GM12878 (cell line): ENCODE measurements at regions of chr11 and their contacts with region 1.

Region 1: GRCh38 chr11:18768472-18768901 is 23.1 kb downstream of the PTPN5 start:
- DNase-seq: peak; percentile 77
- ATAC-seq: peak; percentile 80
- H3K4me3 ChIP-seq: no peak overlapping the region
- H3K27ac ChIP-seq: peak overlapping the region; percentile 35
- H3K4me1 ChIP-seq: peaks cover 38% of the 10 kb centered on the region
- H3K27me3 ChIP-seq: no peaks in the 10 kb centered on the region
- CTCF ChIP-seq: no peak
- EP300 ChIP-seq: peak; percentile 92 to 94
- POLR2A ChIP-seq: no peak
- RAD21 ChIP-seq: no peak

Region 2: DNA sequence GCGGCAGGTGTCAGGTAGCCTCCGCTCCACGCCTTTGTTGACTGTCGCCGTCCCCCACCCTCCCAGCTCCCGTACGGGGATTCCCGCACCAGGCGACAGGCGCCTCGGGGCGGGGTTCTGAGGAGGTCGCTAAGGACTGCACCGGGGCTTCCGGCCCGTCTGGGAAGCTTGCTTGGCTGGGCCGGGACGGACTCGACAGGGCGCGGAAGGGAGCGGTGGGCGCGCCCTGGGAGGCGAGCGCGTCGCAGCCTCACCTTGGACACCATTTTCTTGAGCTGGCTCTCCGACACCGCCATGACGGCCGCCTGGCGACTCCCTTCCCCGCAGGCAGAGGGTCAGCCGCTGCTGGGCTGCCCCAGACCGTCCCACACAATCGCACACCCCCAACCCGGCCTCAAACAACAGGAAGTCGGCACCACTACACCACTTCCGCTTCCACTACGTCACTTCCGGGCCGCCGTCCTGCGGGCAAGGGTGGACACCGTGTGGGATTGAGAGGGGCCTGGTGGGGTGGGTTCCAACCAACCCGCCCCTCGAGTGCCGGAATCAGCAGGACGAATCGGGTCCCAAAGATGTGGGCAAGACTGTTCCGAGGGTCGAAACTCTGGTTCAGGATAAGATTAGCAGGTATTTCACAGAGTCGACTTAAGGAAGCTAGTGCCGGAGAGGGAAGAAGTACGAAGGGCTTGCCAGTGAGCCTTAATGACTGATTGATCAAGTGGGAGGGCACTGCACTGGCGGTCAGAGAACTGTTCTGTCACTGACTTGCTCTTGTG is 241.8 kb before region 1 on chr11 and contains the start of gene TSG101:
- CTCF ChIA-PET with region 1: interaction called, 5 read pairs
- POLR2A ChIA-PET with region 1: interaction called, 3 read pairs
- RAD21 ChIA-PET with region 1: interaction called, 7 read pairs
- SMC1A ChIA-PET with region 1: no interaction called
- in situ Hi-C with region 1: no loop called
- intact Hi-C with region 1: loop called (anchors 5 kb)
- DNase-seq: peak; percentile 69
- ATAC-seq: peak; percentile 91
- H3K4me3 ChIP-seq: peak within 1 kb of the TSS; percentile 95
- H3K27ac ChIP-seq: peak within 1 kb of the TSS; percentile 91
- H3K4me1 ChIP-seq: no peaks in the 10 kb centered on the region; the same call in 1 of the 2 replicates
- H3K27me3 ChIP-seq: no peaks in the 10 kb centered on the region
- CTCF ChIP-seq: no peak
- EP300 ChIP-seq: peak in 1 of 2 experiments; percentile 15; a peak in 1 of 4 replicates
- POLR2A ChIP-seq: peak; percentile 98
- RAD21 ChIP-seq: no peak
- polyA plus RNA-seq, gene TSG101: 22.3 to 37.6 TPM

Region 3: DNA sequence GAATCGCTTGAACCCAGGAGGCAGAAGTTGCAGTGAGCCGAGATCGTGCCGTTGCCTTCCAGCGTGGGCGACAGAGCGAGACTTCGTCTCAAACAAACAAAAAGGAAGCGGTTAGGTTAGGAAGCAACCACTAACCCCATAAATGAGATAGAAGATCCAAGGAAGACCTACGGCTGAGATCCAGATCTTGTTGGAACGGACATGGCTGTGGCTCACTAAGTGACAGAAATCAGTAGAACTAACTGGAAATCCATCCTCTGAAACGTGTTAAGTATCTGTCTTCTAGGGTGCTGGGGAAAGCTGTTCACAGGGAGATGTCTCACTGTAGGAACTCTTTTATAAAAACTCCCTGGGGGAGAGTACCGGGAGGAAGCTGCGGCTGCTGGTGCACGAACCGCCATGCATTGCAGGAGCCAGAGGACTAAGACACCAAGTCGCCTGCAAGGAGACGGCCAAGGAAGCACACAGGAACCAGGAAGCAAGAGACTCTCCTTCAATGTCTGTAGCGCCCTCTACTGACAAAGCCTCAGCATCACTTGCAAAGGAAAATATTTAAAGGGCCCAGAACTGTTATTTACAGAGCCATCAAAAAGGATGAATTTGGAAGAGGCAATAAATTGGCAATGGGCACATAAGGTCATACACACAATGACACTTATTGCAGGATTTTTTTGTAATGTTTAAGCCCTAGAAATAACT is 117.5 kb before region 1 on chr11:
- CTCF ChIA-PET with region 1: interaction called, 18 read pairs
- POLR2A ChIA-PET with region 1: no interaction called
- RAD21 ChIA-PET with region 1: interaction called, 3 read pairs
- SMC1A ChIA-PET with region 1: interaction called, 3 read pairs
- in situ Hi-C with region 1: no loop called
- intact Hi-C with region 1: no loop called
- DNase-seq: peak; percentile 20
- ATAC-seq: peak; percentile 94
- H3K4me3 ChIP-seq: no peak overlapping the region; the same call in 1 of the 2 replicates
- H3K27ac ChIP-seq: no peak overlapping the region
- H3K4me1 ChIP-seq: no peaks in the 10 kb centered on the region
- H3K27me3 ChIP-seq: no peaks in the 10 kb centered on the region
- CTCF ChIP-seq: peak; percentile 73 to 86 (median 75)
- EP300 ChIP-seq: no peak
- POLR2A ChIP-seq: peak; percentile 57; the same call in 1 of the 2 replicates
- RAD21 ChIP-seq: peak; percentile 87

Region 4: DNA sequence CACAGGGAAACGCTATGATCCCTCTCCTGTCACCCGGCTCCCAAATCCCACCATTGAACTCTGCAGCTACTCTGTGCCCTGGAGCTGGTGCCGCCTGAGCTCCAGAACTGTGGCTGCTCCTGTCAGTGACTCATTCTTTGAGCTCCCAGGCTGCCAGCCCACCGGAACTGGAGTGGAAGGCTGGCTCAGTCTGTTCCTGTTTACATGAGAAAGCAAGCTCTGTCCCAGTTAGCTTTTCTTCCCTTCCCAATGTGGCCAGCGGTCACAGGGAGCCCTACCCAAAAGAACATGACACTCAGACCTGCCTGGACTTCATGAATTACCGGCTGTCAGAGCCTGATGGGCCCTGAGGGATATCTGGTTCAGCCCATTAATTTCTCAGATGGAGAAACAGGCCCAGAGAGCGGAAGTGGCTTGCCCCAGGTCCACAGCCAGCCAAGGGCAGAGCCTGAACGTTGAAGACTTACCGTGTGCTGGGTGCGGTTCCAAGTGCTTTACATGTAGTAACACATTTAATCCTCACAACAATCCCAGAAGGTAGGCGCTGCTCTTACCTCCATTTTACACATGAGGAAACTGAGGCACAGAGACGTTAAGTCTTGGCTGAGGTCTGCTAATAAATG is 18.7 kb before region 1 on chr11:
- CTCF ChIA-PET with region 1: interaction called, 494 read pairs
- POLR2A ChIA-PET with region 1: no interaction called
- RAD21 ChIA-PET with region 1: interaction called, 3 read pairs
- SMC1A ChIA-PET with region 1: interaction called, 4 read pairs
- in situ Hi-C with region 1: no loop called
- intact Hi-C with region 1: no loop called
- DNase-seq: no peak
- ATAC-seq: no peak; the same call in 2 of the 3 replicates
- H3K4me3 ChIP-seq: no peak overlapping the region
- H3K27ac ChIP-seq: no peak overlapping the region
- H3K4me1 ChIP-seq: no peaks in the 10 kb centered on the region
- H3K27me3 ChIP-seq: no peaks in the 10 kb centered on the region; a peak in 1 of 4 replicates
- CTCF ChIP-seq: no peak
- EP300 ChIP-seq: no peak
- POLR2A ChIP-seq: no peak
- RAD21 ChIP-seq: no peak

Region 5: DNA sequence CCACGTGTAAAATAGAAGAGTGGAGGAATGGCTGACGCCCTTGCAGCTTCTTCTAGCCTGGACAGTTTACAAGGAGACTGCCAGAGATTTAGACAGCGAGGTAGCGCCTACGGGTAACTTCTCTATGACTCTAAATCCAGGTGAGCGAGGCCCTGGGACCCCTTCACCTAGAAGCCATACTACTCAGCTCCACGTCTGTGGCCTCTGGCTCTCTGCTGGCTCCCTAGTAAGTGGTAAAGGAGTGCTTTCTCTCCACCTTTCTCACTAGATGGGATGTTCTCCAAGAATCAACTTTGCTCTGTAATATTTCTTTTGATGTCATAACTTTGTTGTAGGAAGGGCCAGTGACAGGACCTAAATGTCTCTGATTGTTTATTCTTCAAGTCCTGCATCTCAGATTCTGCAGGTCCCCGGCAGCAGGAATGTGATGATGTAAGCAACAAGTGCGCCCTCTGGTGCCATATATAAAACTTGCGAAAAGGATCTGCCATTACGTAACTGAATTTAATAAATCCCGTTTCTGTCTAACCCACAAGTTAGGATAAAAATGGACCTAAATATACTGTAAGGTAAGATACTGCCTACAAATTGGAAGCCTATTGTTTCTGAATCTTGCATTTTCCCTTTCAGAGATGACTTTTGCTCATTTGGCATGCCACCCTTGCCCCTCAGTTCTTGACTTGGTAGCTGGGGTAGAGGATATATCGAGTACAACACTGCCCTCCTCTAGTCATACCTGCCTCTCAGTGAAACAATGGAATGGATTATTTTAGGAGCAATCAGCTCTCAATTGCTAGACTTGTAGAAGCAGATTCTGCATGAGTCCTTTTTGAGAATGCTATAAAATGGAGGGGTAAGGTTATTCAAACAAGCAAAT is 34.1 kb after region 1 on chr11:
- CTCF ChIA-PET with region 1: interaction called, 310 read pairs
- POLR2A ChIA-PET with region 1: no interaction called
- RAD21 ChIA-PET with region 1: interaction called, 34 read pairs
- SMC1A ChIA-PET with region 1: interaction called, 174 read pairs
- in situ Hi-C with region 1: no loop called
- intact Hi-C with region 1: no loop called
- DNase-seq: peak; percentile 12
- ATAC-seq: peak; percentile 80
- H3K4me3 ChIP-seq: no peak overlapping the region
- H3K27ac ChIP-seq: no peak overlapping the region
- H3K4me1 ChIP-seq: no peaks in the 10 kb centered on the region
- H3K27me3 ChIP-seq: peaks cover 0 to 9% of the 10 kb centered on the region in 2 experiments; a peak in 2 of 4 replicates
- CTCF ChIP-seq: peak; percentile 53 to 73 (median 71); a peak in 5 of 6 replicates
- EP300 ChIP-seq: no peak
- POLR2A ChIP-seq: no peak
- RAD21 ChIP-seq: peak; percentile 65